ENCODE measurements at regions of chr20 and their contacts with region 1.

Region 1: GRCh38 chr20:7113577-7114466 is 346.3 kb downstream of the BMP2 start:
- DNase-seq: peak; percentile 49
- ATAC-seq: peak; percentile 100
- H3K4me3 ChIP-seq: no peak overlapping the region
- H3K27ac ChIP-seq: no peak overlapping the region
- H3K4me1 ChIP-seq: no peaks in the 10 kb centered on the region
- H3K27me3 ChIP-seq: no peaks in the 10 kb centered on the region; a peak in 1 of 5 replicates
- CTCF ChIP-seq: peak; percentile 84
- EP300 ChIP-seq: no peak
- POLR2A ChIP-seq: no peak
- RAD21 ChIP-seq: peak; percentile 78

Region 2: GRCh38 chr20:7161690-7162089 is 47.9 kb after region 1 on chr20:
- CTCF ChIA-PET with region 1: interaction called, 11 read pairs
- POLR2A ChIA-PET with region 1: no interaction called
- in situ Hi-C with region 1: no loop called
- intact Hi-C with region 1: loop called (anchors 2 kb)
- DNase-seq: peak; percentile 38
- ATAC-seq: peak; percentile 75
- H3K4me3 ChIP-seq: no peak overlapping the region
- H3K27ac ChIP-seq: no peak overlapping the region
- H3K4me1 ChIP-seq: no peaks in the 10 kb centered on the region
- H3K27me3 ChIP-seq: no peaks in the 10 kb centered on the region
- CTCF ChIP-seq: peak; percentile 59
- EP300 ChIP-seq: no peak
- POLR2A ChIP-seq: no peak
- RAD21 ChIP-seq: no peak

Region 3: GRCh38 chr20:7285918-7286556 is 172.2 kb after region 1 on chr20:
- CTCF ChIA-PET with region 1: interaction called, 10 read pairs
- POLR2A ChIA-PET with region 1: no interaction called
- in situ Hi-C with region 1: no loop called
- intact Hi-C with region 1: loop called (anchors 2 kb)
- DNase-seq: peak; percentile 80
- ATAC-seq: peak; percentile 98
- H3K4me3 ChIP-seq: no peak overlapping the region
- H3K27ac ChIP-seq: no peak overlapping the region
- H3K4me1 ChIP-seq: no peaks in the 10 kb centered on the region
- H3K27me3 ChIP-seq: no peaks in the 10 kb centered on the region
- CTCF ChIP-seq: peak; percentile 94
- EP300 ChIP-seq: no peak
- POLR2A ChIP-seq: no peak
- RAD21 ChIP-seq: peak; percentile 78

Region 4: DNA sequence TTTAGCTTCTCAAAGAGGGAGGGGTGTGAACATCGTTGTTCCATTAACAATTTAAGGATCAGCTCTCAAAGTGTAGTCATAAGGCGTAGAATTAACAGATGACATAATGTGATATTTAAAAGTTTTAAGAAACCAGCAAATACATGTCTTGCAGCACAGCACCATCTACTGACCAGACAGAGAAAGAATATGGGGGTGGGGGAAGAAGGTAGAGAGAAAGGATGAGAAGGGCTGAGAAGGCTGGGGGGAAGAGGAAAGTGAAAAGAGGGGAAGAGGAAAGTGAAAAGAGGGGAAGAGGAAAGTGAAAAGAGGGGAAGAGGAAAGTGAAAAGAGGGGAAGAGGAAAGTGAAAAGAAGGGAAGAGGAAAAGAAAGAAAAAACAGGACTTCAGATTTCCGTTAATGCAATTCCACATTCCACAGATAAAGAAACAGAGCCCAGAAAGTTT is 745.6 kb after region 1 on chr20:
- CTCF ChIA-PET with region 1: interaction called, 4 read pairs
- POLR2A ChIA-PET with region 1: no interaction called
- in situ Hi-C with region 1: loop called (anchors 5 kb)
- intact Hi-C with region 1: loop called (anchors 2 kb)
- DNase-seq: peak; percentile 47
- ATAC-seq: peak; percentile 79
- H3K4me3 ChIP-seq: no peak overlapping the region
- H3K27ac ChIP-seq: no peak overlapping the region
- H3K4me1 ChIP-seq: no peaks in the 10 kb centered on the region
- H3K27me3 ChIP-seq: no peaks in the 10 kb centered on the region
- CTCF ChIP-seq: peak; percentile 86
- EP300 ChIP-seq: no peak
- POLR2A ChIP-seq: no peak
- RAD21 ChIP-seq: peak; percentile 67

Region 5: DNA sequence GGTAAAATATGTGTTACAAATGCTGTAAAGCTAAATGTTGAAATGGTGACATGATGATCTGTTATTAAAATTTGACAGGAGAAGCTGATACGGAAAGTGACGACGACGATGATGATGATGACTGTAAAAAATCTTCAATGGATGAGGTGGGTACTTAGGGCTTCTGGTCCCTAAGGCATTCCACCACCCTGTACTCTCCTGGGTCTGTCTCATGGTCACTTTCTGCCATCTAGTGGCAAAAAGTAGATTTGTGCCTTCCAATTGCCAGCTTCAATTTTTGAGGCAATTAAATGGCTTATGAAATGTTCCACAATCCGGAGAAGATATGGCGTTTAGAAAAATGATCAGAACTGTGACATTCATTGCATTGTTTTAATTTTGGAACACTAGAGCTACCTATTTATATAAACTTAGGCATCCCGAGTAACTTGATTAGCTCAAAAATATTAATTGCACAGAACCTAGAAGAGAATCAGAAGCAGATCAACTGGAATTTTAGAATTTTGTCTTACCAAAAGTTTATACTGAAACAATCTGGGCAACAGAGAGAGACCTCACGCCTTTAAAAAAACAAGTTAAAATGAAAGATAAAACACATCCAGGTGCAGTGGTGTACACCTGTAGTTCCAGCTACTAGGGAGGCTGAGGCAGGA is 1608.6 kb after region 1 on chr20:
- CTCF ChIA-PET with region 1: no interaction called
- POLR2A ChIA-PET with region 1: no interaction called
- in situ Hi-C with region 1: no loop called
- intact Hi-C with region 1: loop called (anchors 10 kb)
- DNase-seq: peak; percentile 83
- ATAC-seq: peak; percentile 98
- H3K4me3 ChIP-seq: no peak overlapping the region
- H3K27ac ChIP-seq: no peak overlapping the region
- H3K4me1 ChIP-seq: no peaks in the 10 kb centered on the region
- H3K27me3 ChIP-seq: no peaks in the 10 kb centered on the region
- CTCF ChIP-seq: peak; percentile 94
- EP300 ChIP-seq: no peak
- POLR2A ChIP-seq: no peak
- RAD21 ChIP-seq: peak; percentile 89